ENCODE measurements at regions of chr1 and their contacts with region 1.

Region 1: DNA sequence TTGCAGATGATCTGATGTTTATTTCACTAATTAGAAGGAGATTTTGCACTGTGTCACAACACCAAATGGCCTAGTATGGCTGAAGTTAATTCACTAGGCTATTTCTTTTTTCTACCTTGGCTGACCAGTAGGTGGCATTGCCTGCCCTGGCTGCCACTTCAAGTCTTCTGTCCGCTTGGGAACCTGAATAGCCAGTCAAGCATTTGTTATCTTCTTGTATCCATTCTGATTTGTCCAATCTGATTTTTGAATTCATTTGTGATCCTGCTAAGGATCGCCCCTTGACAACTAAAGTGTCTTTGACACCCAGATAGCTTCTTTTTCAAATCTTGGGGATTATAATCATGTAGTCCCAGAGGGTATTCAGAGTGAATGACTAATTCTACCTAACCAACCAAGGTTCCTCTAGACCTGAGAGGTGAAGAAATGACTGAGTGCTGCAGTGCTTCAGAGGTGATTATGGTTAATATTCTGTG is 99.4 kb downstream of the GIPC2 start:
- DNase-seq: no peak
- H3K4me3 Mint-ChIP-seq: no peak overlapping the region
- H3K27ac Mint-ChIP-seq: no peak overlapping the region
- H3K4me1 Mint-ChIP-seq: peaks cover 22% of the 10 kb centered on the region
- H3K27me3 Mint-ChIP-seq: peaks cover 6% of the 10 kb centered on the region

Region 2: GRCh38 chr1:78607334-78607927 is 462.3 kb after region 1 on chr1:
- intact Hi-C with region 1: loop called (anchors 2 kb)
- DNase-seq: no peak
- H3K4me3 Mint-ChIP-seq: no peak overlapping the region
- H3K27ac Mint-ChIP-seq: no peak overlapping the region
- H3K4me1 Mint-ChIP-seq: no peaks in the 10 kb centered on the region
- H3K27me3 Mint-ChIP-seq: peaks cover 40% of the 10 kb centered on the region

Region 3: GRCh38 chr1:78676347-78676982 is 531.3 kb after region 1 on chr1:
- intact Hi-C with region 1: loop called (anchors 1 kb)
- DNase-seq: peak; percentile 25
- H3K4me3 Mint-ChIP-seq: no peak overlapping the region
- H3K27ac Mint-ChIP-seq: no peak overlapping the region
- H3K4me1 Mint-ChIP-seq: peaks cover 34% of the 10 kb centered on the region
- H3K27me3 Mint-ChIP-seq: peaks cover 8% of the 10 kb centered on the region

Measured in activated T-helper 1 cell treated with anti-CD3 and anti-CD28 coated beads, Interleukin-12 subunit alpha, Interleukin-12 subunit beta, Interleukin-2, Interleukin-4 antibody, amounts not matched to agents 30 ng/mL and 10 ng/mL and 1 ng/mL, durations not matched to agents 14 hours and 24 hours and 36 hours (primary cell).